Keratinocyte (primary cell): ENCODE measurements at regions of chr15 and their contacts with region 1.

Region 1: DNA sequence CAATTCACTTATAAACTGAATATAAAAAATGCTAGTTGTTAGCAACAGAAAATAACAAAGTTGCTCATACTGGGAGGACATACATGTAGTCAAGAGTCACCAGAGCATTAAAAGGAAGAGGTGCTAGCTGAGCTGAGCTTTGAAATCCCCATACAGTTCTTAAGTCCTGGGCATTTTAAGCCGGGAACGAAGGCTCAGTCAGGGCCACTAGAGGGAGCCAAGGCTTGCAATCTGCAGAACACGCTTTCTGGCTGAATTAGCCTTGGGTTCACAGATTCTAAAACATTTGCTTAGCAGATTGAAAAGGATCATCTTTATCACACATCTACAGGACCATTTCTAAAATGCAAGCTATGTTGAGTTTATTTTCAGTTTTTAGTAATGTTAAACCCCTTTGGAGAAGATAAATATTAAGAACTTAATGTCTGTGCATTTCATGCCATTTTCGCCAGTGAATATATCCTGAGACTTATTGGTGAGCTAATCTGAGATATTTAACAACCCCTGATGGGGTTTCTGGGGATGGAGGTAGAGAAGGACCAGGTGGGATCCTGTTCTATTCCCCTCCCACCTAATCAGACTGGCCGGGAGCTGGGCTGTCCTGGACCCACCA is 26.3 kb upstream of the MNS1 start:
- DNase-seq: peak; percentile 42
- H3K4me3 ChIP-seq: no peak overlapping the region
- H3K27ac ChIP-seq: no peak overlapping the region
- H3K4me1 ChIP-seq: no peaks in the 10 kb centered on the region
- H3K27me3 ChIP-seq: no peaks in the 10 kb centered on the region
- CTCF ChIP-seq: peak; percentile 86 to 94 (median 86)

Region 2: GRCh38 chr15:56272454-56272853 is 218.8 kb before region 1 on chr15:
- dilution Hi-C with region 1: no loop called
- DNase-seq: no peak
- H3K4me3 ChIP-seq: no peak overlapping the region
- H3K27ac ChIP-seq: no peak overlapping the region
- H3K4me1 ChIP-seq: no peaks in the 10 kb centered on the region
- H3K27me3 ChIP-seq: no peaks in the 10 kb centered on the region
- CTCF ChIP-seq: no peak

Region 3: DNA sequence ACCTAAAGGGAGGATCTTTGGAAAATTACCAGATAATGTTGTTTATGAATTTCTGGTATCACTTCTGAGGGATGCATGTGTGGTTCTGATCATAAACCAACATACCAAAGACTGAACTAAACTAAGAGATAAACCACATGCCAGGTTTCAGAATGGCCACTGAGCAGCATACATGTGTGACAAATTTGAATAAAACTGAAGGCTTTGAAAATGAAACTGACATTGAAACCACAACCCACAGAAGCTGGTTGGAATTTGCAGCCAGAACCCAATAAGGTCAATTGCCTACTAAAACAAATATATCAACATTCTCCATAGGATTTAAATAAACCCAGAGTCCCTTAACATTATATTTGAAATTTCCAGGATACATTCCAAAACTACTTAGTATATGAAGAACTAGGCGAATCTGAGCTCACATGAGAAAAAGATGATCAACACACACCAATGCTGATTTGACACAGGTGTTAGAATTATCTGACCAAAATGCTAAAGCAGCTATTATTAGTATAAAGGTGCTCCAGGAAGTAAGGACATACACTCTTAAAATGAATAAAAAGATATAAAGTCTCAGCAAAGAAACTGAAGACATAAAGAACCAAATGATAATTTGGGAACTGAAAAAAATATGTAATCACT is 117.0 kb after region 1 on chr15:
- dilution Hi-C with region 1: loop called (anchors 25 kb)
- DNase-seq: no peak
- H3K4me3 ChIP-seq: no peak overlapping the region
- H3K27ac ChIP-seq: no peak overlapping the region
- H3K4me1 ChIP-seq: no peaks in the 10 kb centered on the region
- H3K27me3 ChIP-seq: no peaks in the 10 kb centered on the region
- CTCF ChIP-seq: no peak